GM10248 (cell line): ENCODE measurements at regions of chr3 and their contacts with region 1.

Region 1: DNA sequence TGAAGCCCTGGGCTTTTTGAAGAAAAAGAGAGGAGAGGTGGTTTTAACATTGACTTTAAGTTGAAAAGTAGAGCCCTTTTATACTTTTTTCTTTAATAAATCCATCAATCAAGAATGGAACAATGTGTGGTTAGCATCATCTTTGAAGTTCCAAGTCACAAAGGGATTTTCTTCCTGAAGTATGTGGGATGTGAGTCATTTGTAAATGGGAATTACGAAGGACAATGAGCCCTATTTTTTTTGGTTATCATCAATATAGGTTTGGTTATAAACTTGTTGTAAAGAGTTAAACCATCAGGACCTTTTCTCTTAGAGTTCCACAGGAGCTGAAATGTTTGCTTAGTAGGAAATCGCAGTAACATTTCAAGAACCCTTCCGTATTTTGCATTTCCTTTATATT is 38.3 kb downstream of the PIK3CA start:
- DNase-seq: no peak
- CTCF ChIP-seq: no peak

Region 2: GRCh38 chr3:179174316-179174715 is 12.1 kb before region 1 on chr3:
- CTCF ChIA-PET with region 1: interaction called, 22 read pairs
- POLR2A ChIA-PET with region 1: no interaction called
- DNase-seq: no peak
- CTCF ChIP-seq: no peak